ENCODE measurements at regions of chrX and their contacts with region 1.

Region 1: GRCh38 chrX:20530406-20530921 is 263.8 kb upstream of the RPS6KA3 start:
- DNase-seq: no peak
- ATAC-seq: no peak
- H3K4me3 Mint-ChIP-seq: no peak overlapping the region
- H3K27ac Mint-ChIP-seq: no peak overlapping the region
- H3K4me1 Mint-ChIP-seq: peaks cover 1% of the 10 kb centered on the region
- H3K27me3 Mint-ChIP-seq: peaks cover 21% of the 10 kb centered on the region
- CTCF ChIP-seq: peak; percentile 32

Region 2: GRCh38 chrX:20101934-20102581 is 428.4 kb before region 1 on chrX:
- CTCF ChIA-PET with region 1: no interaction called
- POLR2A ChIA-PET with region 1: no interaction called
- intact Hi-C with region 1: no loop called
- DNase-seq: no peak
- ATAC-seq: no peak
- H3K4me3 Mint-ChIP-seq: no peak overlapping the region
- H3K27ac Mint-ChIP-seq: no peak overlapping the region
- H3K4me1 Mint-ChIP-seq: no peaks in the 10 kb centered on the region
- H3K27me3 Mint-ChIP-seq: no peaks in the 10 kb centered on the region
- CTCF ChIP-seq: no peak

Region 3: GRCh38 chrX:20252381-20253231 is 277.9 kb before region 1 on chrX:
- CTCF ChIA-PET with region 1: no interaction called
- POLR2A ChIA-PET with region 1: no interaction called
- intact Hi-C with region 1: loop called (anchors 5 kb)
- DNase-seq: peak; percentile 42
- ATAC-seq: peak; percentile 75
- H3K4me3 Mint-ChIP-seq: no peak overlapping the region
- H3K27ac Mint-ChIP-seq: no peak overlapping the region
- H3K4me1 Mint-ChIP-seq: peaks cover 45% of the 10 kb centered on the region
- H3K27me3 Mint-ChIP-seq: no peaks in the 10 kb centered on the region
- CTCF ChIP-seq: no peak

Region 4: DNA sequence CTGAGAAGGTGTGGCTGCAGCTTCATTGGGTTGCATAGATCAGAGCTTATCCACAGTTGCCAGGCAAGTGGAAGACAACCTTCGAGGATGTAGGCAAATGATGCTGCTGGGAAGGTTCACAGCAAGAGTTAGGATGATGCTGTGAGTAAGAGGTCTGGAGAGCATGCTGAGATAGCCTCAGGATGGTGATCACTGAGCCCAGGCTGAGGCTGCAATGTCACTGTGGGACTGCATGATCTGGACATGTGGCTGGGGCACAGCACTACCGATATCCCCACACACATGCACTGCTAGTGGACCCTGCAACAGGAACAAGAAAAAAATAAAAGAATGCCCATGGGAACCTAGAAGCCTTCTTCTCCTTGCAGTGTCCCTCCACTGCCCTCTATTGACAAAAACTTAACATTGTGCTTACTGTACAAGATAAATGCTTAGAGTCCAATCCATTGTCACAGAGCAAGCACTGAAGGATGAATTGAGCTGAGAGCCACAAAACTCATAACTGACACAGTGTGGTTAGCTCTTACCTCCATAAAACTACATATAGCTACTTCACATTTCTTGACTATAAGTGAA is 949.3 kb after region 1 on chrX:
- CTCF ChIA-PET with region 1: interaction called, 77 read pairs
- POLR2A ChIA-PET with region 1: no interaction called
- intact Hi-C with region 1: loop called (anchors 1 kb)
- DNase-seq: peak; percentile 14
- ATAC-seq: peak; percentile 86
- H3K4me3 Mint-ChIP-seq: no peak overlapping the region
- H3K27ac Mint-ChIP-seq: no peak overlapping the region
- H3K4me1 Mint-ChIP-seq: peaks cover 4% of the 10 kb centered on the region
- H3K27me3 Mint-ChIP-seq: no peaks in the 10 kb centered on the region
- CTCF ChIP-seq: no peak

Region 5: GRCh38 chrX:21725496-21725895 is 1195.0 kb after region 1 on chrX:
- CTCF ChIA-PET with region 1: interaction called, 30 read pairs
- POLR2A ChIA-PET with region 1: no interaction called
- intact Hi-C with region 1: loop called (anchors 1 kb)
- DNase-seq: no peak
- ATAC-seq: no peak
- H3K4me3 Mint-ChIP-seq: no peak overlapping the region
- H3K27ac Mint-ChIP-seq: no peak overlapping the region
- H3K4me1 Mint-ChIP-seq: no peaks in the 10 kb centered on the region
- H3K27me3 Mint-ChIP-seq: no peaks in the 10 kb centered on the region
- CTCF ChIP-seq: no peak

Region 6: DNA sequence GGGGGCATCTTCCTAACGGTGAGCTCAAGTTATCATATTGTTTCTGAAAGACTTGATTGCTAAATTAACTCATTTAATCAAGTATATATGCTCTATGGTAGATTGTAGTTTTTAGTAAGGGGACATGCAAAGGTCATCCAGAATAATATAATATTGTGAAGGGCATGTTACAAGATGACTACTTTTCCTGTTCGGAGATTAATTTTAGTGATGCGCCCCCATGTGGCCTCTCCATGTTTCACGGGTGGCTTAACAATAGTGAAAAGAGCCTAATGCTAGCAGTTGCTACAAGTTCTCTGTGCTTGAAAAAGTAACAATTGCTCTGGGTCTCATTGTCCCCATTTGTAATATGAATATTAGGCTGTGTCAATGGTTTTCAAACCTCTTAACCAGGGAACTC is 1215.3 kb after region 1 on chrX:
- CTCF ChIA-PET with region 1: interaction called, 11 read pairs
- POLR2A ChIA-PET with region 1: no interaction called
- intact Hi-C with region 1: loop called (anchors 1 kb)
- DNase-seq: peak; percentile 13
- ATAC-seq: no peak
- H3K4me3 Mint-ChIP-seq: no peak overlapping the region
- H3K27ac Mint-ChIP-seq: no peak overlapping the region
- H3K4me1 Mint-ChIP-seq: no peaks in the 10 kb centered on the region
- H3K27me3 Mint-ChIP-seq: peaks cover 3% of the 10 kb centered on the region
- CTCF ChIP-seq: no peak

Region 7: GRCh38 chrX:21972721-21973120 is 1442.3 kb after region 1 on chrX:
- CTCF ChIA-PET with region 1: no interaction called
- POLR2A ChIA-PET with region 1: no interaction called
- intact Hi-C with region 1: loop called (anchors 10 kb)
- DNase-seq: no peak
- ATAC-seq: peak; percentile 56
- H3K4me3 Mint-ChIP-seq: no peak overlapping the region
- H3K27ac Mint-ChIP-seq: peak overlapping the region; percentile 72
- H3K4me1 Mint-ChIP-seq: peaks cover 27% of the 10 kb centered on the region
- H3K27me3 Mint-ChIP-seq: no peaks in the 10 kb centered on the region
- CTCF ChIP-seq: no peak

Measured in activated B cell treated with CpG ODN at 0.5 μM for 24 hours (primary cell).